ENCODE measurements at regions of chr14 and their contacts with region 1.

Region 1: DNA sequence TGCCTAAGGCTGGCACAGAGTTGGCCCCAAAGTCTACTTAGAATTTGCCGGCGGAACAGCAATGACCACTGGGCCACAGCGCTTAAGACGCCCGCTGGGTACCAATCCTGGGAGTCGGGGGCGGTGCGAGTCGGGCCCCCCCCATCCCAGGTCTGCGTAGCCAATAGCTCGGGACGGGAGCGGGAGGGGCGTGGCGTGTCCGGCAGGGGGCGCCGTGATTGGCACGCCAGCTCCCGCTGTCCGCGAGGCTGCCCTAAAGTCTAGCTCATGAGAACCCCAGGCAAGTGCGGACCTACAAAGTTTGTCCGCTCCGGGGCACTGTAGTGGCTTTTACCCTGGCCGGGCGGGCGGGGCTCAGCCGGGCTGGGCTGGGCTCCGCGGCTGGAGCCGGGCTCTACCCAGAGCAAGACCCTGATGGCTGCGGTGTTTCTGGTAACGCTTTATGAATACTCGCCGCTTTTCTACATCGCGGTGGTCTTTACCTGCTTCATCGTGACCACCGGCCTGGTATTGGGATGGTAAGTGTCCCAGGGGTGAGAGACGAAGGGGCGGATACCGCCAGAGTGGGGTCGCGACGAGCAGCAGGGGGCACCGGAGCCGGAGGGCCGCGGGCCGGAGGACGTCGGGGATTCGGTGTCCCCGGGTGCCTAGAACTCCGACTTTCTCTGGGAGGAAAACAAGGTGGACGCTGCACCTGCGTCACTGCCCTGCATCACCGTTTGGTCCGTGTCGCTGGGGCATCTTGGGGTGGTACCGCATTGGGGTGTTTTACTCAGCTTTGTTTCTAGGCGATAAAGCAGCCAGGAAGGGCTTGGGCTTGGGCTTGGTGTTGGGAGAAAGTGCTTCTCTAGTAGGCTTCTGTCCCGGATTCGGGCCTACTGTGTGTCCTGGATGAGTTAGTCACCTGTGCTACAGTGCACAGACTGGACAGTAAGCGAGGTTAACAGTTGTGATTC is at the start of gene CGRRF1:
- DNase-seq: peak; percentile 92 to 97 (median 95)
- H3K4me3 ChIP-seq: peak within 1 kb of the TSS; percentile 97
- H3K4me3 Mint-ChIP-seq: peak within 1 kb of the TSS; percentile 95 to 99 (median 97)
- H3K27ac ChIP-seq: peak within 1 kb of the TSS; percentile 88
- H3K27ac Mint-ChIP-seq: peak within 1 kb of the TSS; percentile 81 to 97 (median 94)
- H3K4me1 ChIP-seq: peaks cover 32% of the 10 kb centered on the region
- H3K4me1 Mint-ChIP-seq: peaks cover 47 to 58% (median 57%) of the 10 kb centered on the region in 3 donors
- H3K27me3 ChIP-seq: no peaks in the 10 kb centered on the region
- H3K27me3 Mint-ChIP-seq: no peaks in the 10 kb centered on the region
- total RNA-seq, gene CGRRF1: 13.3 to 15.3 TPM

Region 2: GRCh38 chr14:54488646-54489317 is 21.0 kb before region 1 on chr14 and contains the start of gene GMFB:
- CTCF ChIA-PET with region 1: interaction called, 44 read pairs
- POLR2A ChIA-PET with region 1: interaction called, 11 read pairs
- DNase-seq: peak; percentile 83 to 92 (median 84)
- H3K4me3 ChIP-seq: peak within 1 kb of the TSS; percentile 69
- H3K4me3 Mint-ChIP-seq: peak within 1 kb of the TSS; percentile 87 to 97 (median 92)
- H3K27ac ChIP-seq: peak within 1 kb of the TSS; percentile 78
- H3K27ac Mint-ChIP-seq: peak within 1 kb of the TSS; percentile 85 to 98 (median 92)
- H3K4me1 ChIP-seq: peaks cover 32% of the 10 kb centered on the region
- H3K4me1 Mint-ChIP-seq: peaks cover 46 to 72% (median 59%) of the 10 kb centered on the region in 3 donors
- H3K27me3 ChIP-seq: no peaks in the 10 kb centered on the region
- H3K27me3 Mint-ChIP-seq: peaks cover 0 to 7% of the 10 kb centered on the region in 2 donors
- total RNA-seq, gene GMFB: 56.4 to 61.3 TPM

Region 3: GRCh38 chr14:54627540-54628363 is 117.9 kb after region 1 on chr14:
- CTCF ChIA-PET with region 1: no interaction called
- POLR2A ChIA-PET with region 1: no interaction called
- DNase-seq: peak in 3 of 5 donors; percentile 11 to 50 (median 49)
- H3K4me3 ChIP-seq: peak overlapping the region; percentile 52
- H3K4me3 Mint-ChIP-seq: peak overlapping the region; percentile 59 to 86 (median 81)
- H3K27ac ChIP-seq: peak overlapping the region; percentile 51
- H3K27ac Mint-ChIP-seq: peak overlapping the region; percentile 76 to 95 (median 91)
- H3K4me1 ChIP-seq: peaks cover 34% of the 10 kb centered on the region
- H3K4me1 Mint-ChIP-seq: peaks cover 41 to 50% (median 43%) of the 10 kb centered on the region in 3 donors
- H3K27me3 ChIP-seq: no peaks in the 10 kb centered on the region
- H3K27me3 Mint-ChIP-seq: no peaks in the 10 kb centered on the region